A549 (cell line): ENCODE measurements at regions of chr4 and their contacts with region 1.

Region 1: DNA sequence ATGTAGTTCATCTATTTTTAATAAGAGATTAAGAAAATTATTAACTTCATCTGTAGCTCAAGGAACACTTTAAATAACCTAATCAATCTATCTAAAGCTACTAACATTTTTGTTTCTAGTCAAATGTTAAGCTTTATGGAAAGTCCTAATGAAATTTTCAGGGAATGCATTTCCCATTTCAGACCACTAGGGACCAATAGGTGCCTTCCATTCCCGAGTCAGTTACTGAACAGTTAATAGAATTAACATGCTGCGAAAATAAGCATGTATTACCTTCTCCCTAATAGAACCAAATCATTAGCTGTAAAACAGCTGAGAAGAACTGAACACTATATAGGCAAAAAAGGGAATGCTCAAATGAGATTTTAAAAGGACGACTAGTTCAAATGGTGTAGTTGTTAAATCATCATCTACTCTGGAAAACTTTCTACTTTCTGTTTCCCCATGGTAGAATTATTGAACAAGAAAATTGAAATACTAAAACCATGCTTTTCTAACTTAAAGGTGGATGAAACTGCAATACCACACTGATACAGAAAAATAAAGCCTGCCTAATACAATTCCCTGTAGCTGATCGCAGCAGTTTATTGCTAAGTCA is 22.5 kb downstream of the STX18 start:
- DNase-seq: peak; percentile 10 to 14
- ATAC-seq: peak in 1 of 2 experiments; percentile 58; a peak in 2 of 6 replicates
- H3K4me3 ChIP-seq: no peak overlapping the region
- H3K27ac ChIP-seq: no peak overlapping the region
- H3K4me1 ChIP-seq: peaks cover 14% of the 10 kb centered on the region; the same call in 2 of the 3 replicates
- CTCF ChIP-seq: peak; percentile 33; the same call in 2 of the 3 replicates
- EP300 ChIP-seq: no peak
- POLR2A ChIP-seq: no peak
- RAD21 ChIP-seq: peak; percentile 16 to 34; a peak in 2 of 5 replicates

Region 2: GRCh38 chr4:4507923-4508322 is 11.5 kb before region 1 on chr4:
- CTCF ChIA-PET with region 1: interaction called, 10 read pairs
- POLR2A ChIA-PET with region 1: no interaction called
- DNase-seq: peak in 1 of 2 experiments; percentile 9
- ATAC-seq: peak in 1 of 2 experiments; percentile 60; a peak in 1 of 6 replicates
- H3K4me3 ChIP-seq: no peak overlapping the region
- H3K27ac ChIP-seq: no peak overlapping the region
- H3K4me1 ChIP-seq: no peaks in the 10 kb centered on the region
- CTCF ChIP-seq: peak; percentile 30; the same call in 1 of the 3 replicates
- EP300 ChIP-seq: no peak
- POLR2A ChIP-seq: no peak
- RAD21 ChIP-seq: no peak

Region 3: DNA sequence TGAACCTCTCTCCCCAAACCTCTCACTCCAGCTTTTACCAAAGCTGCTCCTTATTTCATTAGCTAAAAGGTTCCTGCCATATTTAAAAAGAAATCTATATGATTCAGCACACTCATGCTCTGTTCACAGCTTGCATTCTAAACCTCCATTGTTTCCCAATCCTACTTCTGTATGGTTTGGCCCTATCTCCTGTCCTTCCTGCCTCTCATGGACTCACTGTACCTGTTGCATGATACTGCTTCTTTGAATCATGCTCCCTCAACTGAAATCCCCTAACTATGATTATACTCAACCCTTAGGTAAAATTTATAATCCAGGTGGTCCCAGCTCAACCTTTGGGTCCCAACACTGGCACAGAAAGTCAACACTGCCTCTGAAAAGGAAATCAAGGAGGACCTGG is 16.2 kb after region 1 on chr4:
- CTCF ChIA-PET with region 1: interaction called, 10 read pairs
- POLR2A ChIA-PET with region 1: no interaction called
- DNase-seq: no peak
- ATAC-seq: no peak
- H3K4me3 ChIP-seq: no peak overlapping the region
- H3K27ac ChIP-seq: no peak overlapping the region
- H3K4me1 ChIP-seq: peaks cover 5% of the 10 kb centered on the region; the same call in 2 of the 3 replicates
- CTCF ChIP-seq: no peak
- EP300 ChIP-seq: no peak
- POLR2A ChIP-seq: no peak
- RAD21 ChIP-seq: no peak

Region 4: DNA sequence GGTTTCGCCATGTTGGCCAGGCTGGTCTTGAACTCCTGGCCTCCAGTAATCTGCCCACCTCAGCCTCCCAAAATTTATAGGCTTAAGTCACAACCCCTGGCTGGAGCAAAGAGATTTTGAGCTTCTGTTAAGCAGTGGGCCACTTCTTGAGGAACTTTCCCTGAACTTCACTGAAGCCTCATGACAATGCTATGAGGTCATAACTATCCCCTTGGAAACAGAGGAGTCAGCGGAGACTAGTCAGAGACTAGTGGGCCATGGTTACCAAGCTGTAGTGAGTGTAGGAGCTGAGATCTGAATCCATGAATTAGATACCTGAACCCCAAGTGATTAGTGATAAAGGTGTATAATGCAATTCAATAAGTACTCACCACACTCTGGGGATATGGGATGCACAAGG is 194.9 kb after region 1 on chr4:
- CTCF ChIA-PET with region 1: no interaction called
- POLR2A ChIA-PET with region 1: no interaction called
- DNase-seq: no peak
- ATAC-seq: no peak
- H3K4me3 ChIP-seq: no peak overlapping the region
- H3K27ac ChIP-seq: no peak overlapping the region
- H3K4me1 ChIP-seq: no peaks in the 10 kb centered on the region
- CTCF ChIP-seq: no peak
- EP300 ChIP-seq: no peak
- POLR2A ChIP-seq: no peak
- RAD21 ChIP-seq: no peak